ENCODE measurements at regions of chr3 and their contacts with region 1.

Region 1: GRCh38 chr3:108062051-108062450 is 28.8 kb downstream of the CD47 start:
- DNase-seq: no peak
- ATAC-seq: peak in 2 of 3 donors; percentile 36 to 49
- H3K4me3 ChIP-seq: no peak overlapping the region
- H3K4me3 Mint-ChIP-seq: no peak overlapping the region
- H3K27ac ChIP-seq: no peak overlapping the region
- H3K27ac Mint-ChIP-seq: peak overlapping the region; percentile 56 to 70
- H3K4me1 ChIP-seq: peaks cover 4% of the 10 kb centered on the region
- H3K4me1 Mint-ChIP-seq: peaks cover 58 to 75% of the 10 kb centered on the region in 2 donors
- H3K27me3 ChIP-seq: no peaks in the 10 kb centered on the region
- H3K27me3 Mint-ChIP-seq: no peaks in the 10 kb centered on the region
- CTCF ChIP-seq: no peak

Region 2: GRCh38 chr3:108100906-108101660 is 39.0 kb after region 1 on chr3:
- intact Hi-C with region 1: loop called (anchors 5 kb)
- DNase-seq: peak in 1 of 2 donors; percentile 68
- ATAC-seq: peak; percentile 26 to 33 (median 28)
- H3K4me3 ChIP-seq: no peak overlapping the region
- H3K4me3 Mint-ChIP-seq: peak overlapping the region; percentile 75
- H3K27ac ChIP-seq: peak overlapping the region; percentile 69
- H3K27ac Mint-ChIP-seq: peak overlapping the region; percentile 88 to 97
- H3K4me1 ChIP-seq: peaks cover 72% of the 10 kb centered on the region
- H3K4me1 Mint-ChIP-seq: peaks cover 77 to 81% of the 10 kb centered on the region in 2 donors
- H3K27me3 ChIP-seq: no peaks in the 10 kb centered on the region
- H3K27me3 Mint-ChIP-seq: no peaks in the 10 kb centered on the region
- CTCF ChIP-seq: no peak

Measured in natural killer cell (primary cell).